ENCODE measurements at regions of chr22 and their contacts with region 1.

Region 1: DNA sequence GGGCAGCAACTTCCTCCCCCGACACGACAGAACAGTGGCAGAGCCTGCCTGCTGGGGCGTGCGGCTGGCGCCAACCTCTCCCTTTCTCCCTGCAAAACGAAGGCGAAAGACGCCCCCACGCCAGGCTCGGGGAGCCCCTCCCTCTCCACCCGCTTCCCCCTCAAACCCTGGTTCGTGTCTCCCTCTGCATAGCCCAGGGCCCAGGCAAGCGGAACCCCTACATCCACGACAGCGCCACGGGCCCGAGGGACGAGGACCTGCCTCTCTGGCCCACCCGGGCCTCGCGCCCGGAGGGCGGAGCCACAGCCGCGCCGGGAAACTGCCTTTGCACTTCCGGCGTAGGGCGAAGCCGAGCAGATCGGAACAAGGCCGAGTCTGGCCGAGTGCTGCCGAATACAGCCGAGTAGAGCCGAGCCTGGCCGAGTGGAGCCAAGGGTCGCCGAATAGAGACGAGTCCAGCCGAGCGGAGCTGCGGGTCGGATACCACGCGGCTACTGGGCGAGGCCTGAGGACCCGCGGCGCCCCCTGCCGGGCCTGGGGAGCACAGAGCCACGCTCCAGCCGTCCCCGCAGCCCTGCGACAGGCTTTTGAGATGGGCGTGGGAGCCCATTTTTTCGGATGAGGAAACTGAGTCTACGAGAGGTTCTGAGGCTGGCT is 11.2 kb upstream of the C1QTNF6 start:
- DNase-seq: peak; percentile 100
- H3K4me3 Mint-ChIP-seq: peak overlapping the region; percentile 86
- H3K27ac Mint-ChIP-seq: peak overlapping the region; percentile 94
- H3K4me1 Mint-ChIP-seq: peaks cover 36% of the 10 kb centered on the region
- H3K27me3 Mint-ChIP-seq: no peaks in the 10 kb centered on the region

Region 2: GRCh38 chr22:36977947-36978660 is 221.1 kb before region 1 on chr22:
- intact Hi-C with region 1: loop called (anchors 5 kb)
- DNase-seq: peak; percentile 84
- H3K4me3 Mint-ChIP-seq: peak overlapping the region; percentile 83
- H3K27ac Mint-ChIP-seq: peak overlapping the region; percentile 84
- H3K4me1 Mint-ChIP-seq: peaks cover 8% of the 10 kb centered on the region
- H3K27me3 Mint-ChIP-seq: no peaks in the 10 kb centered on the region

Region 3: GRCh38 chr22:37077884-37078485 is 121.2 kb before region 1 on chr22:
- intact Hi-C with region 1: loop called (anchors 1 kb)
- DNase-seq: peak; percentile 71
- H3K4me3 Mint-ChIP-seq: peak overlapping the region; percentile 5
- H3K27ac Mint-ChIP-seq: peak overlapping the region; percentile 99
- H3K4me1 Mint-ChIP-seq: peaks cover 55% of the 10 kb centered on the region
- H3K27me3 Mint-ChIP-seq: no peaks in the 10 kb centered on the region

Region 4: DNA sequence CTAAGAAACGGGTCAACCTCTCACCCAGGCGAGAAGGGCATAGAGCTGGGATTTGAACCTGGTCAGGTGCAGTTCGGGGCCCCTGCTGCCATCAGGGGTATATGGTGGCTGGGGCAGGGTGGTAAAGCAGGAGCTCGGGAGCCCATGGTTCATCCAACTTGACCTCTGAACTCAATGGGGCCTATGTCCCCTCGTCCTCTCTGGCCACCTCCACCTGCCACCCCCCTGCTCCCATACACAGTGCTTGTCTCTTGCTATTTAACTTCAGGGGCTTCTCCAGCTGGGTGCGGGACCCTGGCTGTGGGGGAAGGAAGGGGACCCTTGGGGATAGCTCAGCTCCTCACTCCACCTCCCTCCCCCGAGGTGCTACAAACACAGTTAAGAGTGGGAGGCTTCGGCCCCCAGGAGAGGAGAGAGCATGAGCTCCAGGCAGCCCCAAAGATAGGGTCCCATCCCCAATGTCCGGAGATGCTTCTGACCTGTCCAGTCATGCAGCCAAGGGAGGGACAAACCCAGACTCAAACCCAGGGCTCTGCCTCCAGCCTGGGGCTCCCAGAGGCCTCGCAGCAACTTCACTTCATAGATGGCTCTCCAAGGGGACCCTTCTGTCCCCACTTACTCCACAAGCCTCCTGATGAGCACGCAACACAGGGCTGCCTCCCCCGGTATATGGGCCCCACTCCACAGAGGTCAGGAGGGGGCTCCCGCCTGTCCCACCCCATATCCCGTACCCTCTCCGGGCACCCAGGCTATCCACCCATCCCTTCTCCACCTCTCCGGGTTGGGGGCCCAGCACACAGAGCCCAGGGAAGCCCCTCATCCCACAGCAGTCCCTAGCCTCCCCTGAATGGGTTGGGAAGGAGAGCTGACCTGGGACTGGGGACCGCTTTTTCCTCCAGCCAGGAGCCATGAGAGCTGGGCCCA is 50.2 kb before region 1 on chr22:
- intact Hi-C with region 1: loop called (anchors 1 kb)
- DNase-seq: no peak
- H3K4me3 Mint-ChIP-seq: peak overlapping the region; percentile 92
- H3K27ac Mint-ChIP-seq: peak overlapping the region; percentile 94
- H3K4me1 Mint-ChIP-seq: peaks cover 46% of the 10 kb centered on the region
- H3K27me3 Mint-ChIP-seq: no peaks in the 10 kb centered on the region

Region 5: GRCh38 chr22:37218771-37219411 is 19.7 kb after region 1 on chr22:
- intact Hi-C with region 1: loop called (anchors 1 kb)
- DNase-seq: peak; percentile 70
- H3K4me3 Mint-ChIP-seq: peak overlapping the region; percentile 66
- H3K27ac Mint-ChIP-seq: peak overlapping the region; percentile 80
- H3K4me1 Mint-ChIP-seq: peaks cover 65% of the 10 kb centered on the region
- H3K27me3 Mint-ChIP-seq: no peaks in the 10 kb centered on the region

Region 6: DNA sequence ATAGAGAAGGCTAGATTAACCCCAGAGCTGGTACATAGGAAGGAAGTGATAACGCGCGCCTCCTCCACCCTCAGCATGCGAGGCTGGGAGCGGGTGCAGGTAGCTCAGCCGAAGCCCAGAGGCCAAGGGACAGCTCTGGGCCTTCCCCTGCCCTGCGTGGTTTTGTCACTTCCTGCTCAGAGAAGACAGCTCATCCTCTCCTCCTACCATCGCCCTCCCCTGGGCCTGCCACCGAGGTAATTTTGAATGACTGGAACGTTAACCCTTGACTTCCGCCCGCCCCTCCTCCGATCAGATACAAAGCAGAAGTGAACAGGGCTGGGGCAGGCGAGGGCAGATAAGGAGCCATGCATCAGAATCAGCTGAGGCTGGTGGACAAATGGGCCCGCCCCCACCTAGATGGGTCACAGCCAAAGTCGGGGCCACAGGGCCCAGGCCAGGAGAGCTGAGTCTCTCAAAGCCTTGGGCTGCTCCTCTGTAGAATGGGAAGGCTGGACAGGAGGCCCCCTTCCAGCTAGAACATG is 43.2 kb after region 1 on chr22:
- intact Hi-C with region 1: loop called (anchors 1 kb)
- DNase-seq: peak; percentile 92
- H3K4me3 Mint-ChIP-seq: peak overlapping the region; percentile 96
- H3K27ac Mint-ChIP-seq: peak overlapping the region; percentile 94
- H3K4me1 Mint-ChIP-seq: peaks cover 51% of the 10 kb centered on the region
- H3K27me3 Mint-ChIP-seq: no peaks in the 10 kb centered on the region